Activated CD8-positive, alpha-beta T cell treated with anti-CD3 and anti-CD28 coated beads for 36 hours (primary cell): ENCODE measurements at regions of chr10 and their contacts with region 1.

Region 1: DNA sequence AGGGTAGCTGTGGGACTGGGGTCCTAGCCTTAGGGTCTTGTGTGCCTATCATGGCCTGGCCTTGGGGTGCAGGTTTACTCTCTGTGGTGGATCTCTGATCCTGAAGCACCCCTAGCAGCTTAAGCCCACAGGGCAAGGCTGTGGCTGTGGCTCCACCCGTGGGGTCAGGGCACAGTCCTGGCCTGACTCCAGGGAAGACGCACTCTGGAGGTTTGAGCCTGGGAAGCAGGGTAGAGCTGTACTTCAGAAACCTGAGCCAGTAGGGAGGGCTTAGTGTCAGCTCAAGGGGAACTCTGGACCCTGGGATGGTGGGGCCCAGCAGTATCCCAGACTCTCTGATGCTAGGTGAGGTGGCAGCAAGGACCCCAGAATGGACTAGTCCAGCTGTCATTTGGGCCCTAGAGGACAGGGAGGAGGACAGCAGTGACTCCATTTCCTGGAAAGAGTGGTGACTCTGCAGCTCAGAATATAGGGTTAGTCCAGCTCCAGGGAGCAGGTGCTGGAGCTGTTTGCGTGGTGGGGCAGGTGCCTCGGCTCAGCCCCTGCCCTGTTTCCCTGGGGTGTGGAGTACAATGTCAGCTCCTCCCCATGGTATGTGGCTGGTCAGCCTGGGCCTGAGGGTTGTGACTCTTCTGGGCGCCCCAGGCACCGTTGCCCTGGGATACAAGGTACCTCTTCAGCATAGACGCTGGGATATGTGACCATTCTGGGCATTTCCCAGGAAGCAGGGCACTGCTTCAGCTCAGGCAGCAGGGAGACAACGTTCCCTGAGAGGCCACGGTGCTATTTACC is 15.8 kb downstream of the GTPBP4 start:
- DNase-seq: no peak
- ATAC-seq: no peak
- H3K4me3 Mint-ChIP-seq: no peak overlapping the region
- H3K27ac Mint-ChIP-seq: no peak overlapping the region
- H3K4me1 Mint-ChIP-seq: peaks cover 24% of the 10 kb centered on the region
- H3K27me3 Mint-ChIP-seq: no peaks in the 10 kb centered on the region
- CTCF ChIP-seq: no peak

Region 2: GRCh38 chr10:1015688-1016087 is 11.6 kb after region 1 on chr10:
- CTCF ChIA-PET with region 1: interaction called, 3 read pairs
- POLR2A ChIA-PET with region 1: interaction called, 13 read pairs
- intact Hi-C with region 1: no loop called
- DNase-seq: no peak
- ATAC-seq: no peak
- H3K4me3 Mint-ChIP-seq: no peak overlapping the region
- H3K27ac Mint-ChIP-seq: no peak overlapping the region
- H3K4me1 Mint-ChIP-seq: no peaks in the 10 kb centered on the region
- H3K27me3 Mint-ChIP-seq: no peaks in the 10 kb centered on the region
- CTCF ChIP-seq: no peak